ENCODE measurements at regions of chr11 and their contacts with region 1.

Region 1: GRCh38 chr11:59053387-59053786 is 32.7 kb upstream of the GLYATL1B start:
- DNase-seq: peak; percentile 88
- H3K4me3 Mint-ChIP-seq: no peak overlapping the region
- H3K27ac Mint-ChIP-seq: no peak overlapping the region
- H3K4me1 Mint-ChIP-seq: peaks cover 3% of the 10 kb centered on the region
- H3K27me3 Mint-ChIP-seq: peaks cover 22% of the 10 kb centered on the region

Region 2: DNA sequence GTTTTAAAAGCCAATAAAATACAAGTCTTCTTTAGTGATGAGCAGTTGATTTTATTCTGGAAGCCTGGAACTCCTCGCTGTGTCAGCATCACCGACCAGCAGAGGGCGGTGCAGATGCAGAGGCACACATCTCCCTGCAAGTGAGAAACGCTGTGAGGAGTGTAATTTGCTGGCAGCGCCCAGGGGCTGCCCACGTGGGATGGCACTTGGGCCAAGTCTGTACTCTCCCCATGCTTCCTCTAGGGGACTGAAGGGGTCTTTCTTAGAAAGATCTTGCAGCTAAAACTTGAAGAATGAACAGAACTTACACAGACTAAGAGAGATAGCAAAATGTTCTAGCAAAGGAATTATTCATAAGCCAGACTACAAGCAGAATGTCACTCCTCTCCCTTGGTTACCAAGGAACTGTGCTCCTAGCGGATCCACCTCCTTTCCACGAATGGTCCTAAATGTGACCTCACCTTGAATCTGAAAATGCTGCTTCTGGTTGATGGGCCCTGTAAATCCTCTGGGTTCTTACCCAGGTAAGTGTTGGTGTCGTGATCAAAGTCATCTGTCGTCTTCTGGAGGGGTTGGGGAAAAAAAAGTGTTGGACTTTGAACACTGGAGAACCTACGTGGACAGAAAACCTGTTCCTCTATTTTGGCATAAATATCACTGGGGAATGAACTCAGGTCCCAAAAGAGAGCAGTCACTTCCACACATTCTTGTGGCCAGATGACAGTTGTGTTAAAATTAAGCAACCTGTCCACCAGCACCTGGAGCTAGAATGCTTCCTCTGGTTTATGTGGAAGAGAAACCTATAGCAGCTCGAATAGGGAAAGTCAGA is 399.1 kb before region 1 on chr11:
- CTCF ChIA-PET with region 1: interaction called, 10 read pairs
- intact Hi-C with region 1: loop called (anchors 1 kb)
- DNase-seq: peak; percentile 89
- H3K4me3 Mint-ChIP-seq: no peak overlapping the region
- H3K27ac Mint-ChIP-seq: no peak overlapping the region
- H3K4me1 Mint-ChIP-seq: peaks cover 18% of the 10 kb centered on the region
- H3K27me3 Mint-ChIP-seq: no peaks in the 10 kb centered on the region

Region 3: GRCh38 chr11:58900479-58901420 is 152.6 kb before region 1 on chr11:
- CTCF ChIA-PET with region 1: interaction called, 4 read pairs
- intact Hi-C with region 1: loop called (anchors 5 kb)
- DNase-seq: peak; percentile 81
- H3K4me3 Mint-ChIP-seq: no peak overlapping the region
- H3K27ac Mint-ChIP-seq: no peak overlapping the region
- H3K4me1 Mint-ChIP-seq: no peaks in the 10 kb centered on the region
- H3K27me3 Mint-ChIP-seq: peaks cover 49% of the 10 kb centered on the region

Region 4: DNA sequence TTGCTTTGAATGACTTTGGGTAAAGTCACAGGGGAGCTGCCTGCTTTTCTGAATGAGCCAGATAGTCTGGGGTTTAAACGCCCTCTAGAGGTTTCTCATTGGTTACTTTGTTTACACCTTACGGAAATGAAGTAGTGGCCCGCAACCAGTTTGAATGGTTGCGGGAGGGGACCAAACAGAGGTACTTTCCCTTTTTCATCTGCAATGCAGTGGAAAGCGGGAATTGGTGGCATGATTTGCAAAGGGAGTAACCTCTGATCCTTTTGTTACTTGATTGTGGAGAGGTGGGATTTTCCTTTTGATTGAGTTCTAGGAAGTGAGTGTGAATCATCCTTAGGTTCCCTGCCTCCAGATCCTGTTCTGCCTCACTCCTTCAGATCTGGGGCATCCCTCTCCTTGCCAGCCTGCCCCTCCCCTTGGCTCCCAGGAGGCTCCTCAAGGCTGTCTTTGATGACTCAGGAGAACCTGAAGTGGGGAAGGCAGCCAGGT is 130.0 kb before region 1 on chr11:
- CTCF ChIA-PET with region 1: interaction called, 5 read pairs
- intact Hi-C with region 1: loop called (anchors 1 kb)
- DNase-seq: peak; percentile 61
- H3K4me3 Mint-ChIP-seq: no peak overlapping the region
- H3K27ac Mint-ChIP-seq: peak overlapping the region; percentile 11
- H3K4me1 Mint-ChIP-seq: peaks cover 25% of the 10 kb centered on the region
- H3K27me3 Mint-ChIP-seq: no peaks in the 10 kb centered on the region

Region 5: DNA sequence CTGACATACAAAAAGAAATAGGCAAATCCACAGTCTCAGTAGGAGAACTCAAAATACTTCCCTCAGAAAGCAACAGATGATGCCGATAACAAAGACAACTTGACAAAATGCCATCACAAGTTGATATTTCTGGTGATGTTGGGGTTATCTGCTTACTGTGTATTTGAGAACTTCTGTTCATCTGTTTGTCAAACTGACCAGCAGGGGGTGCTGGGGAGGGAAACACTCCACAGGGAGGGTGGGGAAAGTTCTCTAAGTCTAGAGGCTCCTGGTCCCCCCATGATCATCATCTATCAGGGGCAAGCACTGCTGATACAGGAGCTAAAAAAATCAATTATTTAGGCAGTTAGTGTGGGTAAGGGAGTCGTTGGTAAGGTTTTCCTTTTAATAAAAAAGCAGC is 94.9 kb before region 1 on chr11:
- CTCF ChIA-PET with region 1: interaction called, 4 read pairs
- intact Hi-C with region 1: loop called (anchors 1 kb)
- DNase-seq: peak; percentile 62
- H3K4me3 Mint-ChIP-seq: no peak overlapping the region
- H3K27ac Mint-ChIP-seq: no peak overlapping the region
- H3K4me1 Mint-ChIP-seq: peaks cover 8% of the 10 kb centered on the region
- H3K27me3 Mint-ChIP-seq: peaks cover 6% of the 10 kb centered on the region

Region 6: DNA sequence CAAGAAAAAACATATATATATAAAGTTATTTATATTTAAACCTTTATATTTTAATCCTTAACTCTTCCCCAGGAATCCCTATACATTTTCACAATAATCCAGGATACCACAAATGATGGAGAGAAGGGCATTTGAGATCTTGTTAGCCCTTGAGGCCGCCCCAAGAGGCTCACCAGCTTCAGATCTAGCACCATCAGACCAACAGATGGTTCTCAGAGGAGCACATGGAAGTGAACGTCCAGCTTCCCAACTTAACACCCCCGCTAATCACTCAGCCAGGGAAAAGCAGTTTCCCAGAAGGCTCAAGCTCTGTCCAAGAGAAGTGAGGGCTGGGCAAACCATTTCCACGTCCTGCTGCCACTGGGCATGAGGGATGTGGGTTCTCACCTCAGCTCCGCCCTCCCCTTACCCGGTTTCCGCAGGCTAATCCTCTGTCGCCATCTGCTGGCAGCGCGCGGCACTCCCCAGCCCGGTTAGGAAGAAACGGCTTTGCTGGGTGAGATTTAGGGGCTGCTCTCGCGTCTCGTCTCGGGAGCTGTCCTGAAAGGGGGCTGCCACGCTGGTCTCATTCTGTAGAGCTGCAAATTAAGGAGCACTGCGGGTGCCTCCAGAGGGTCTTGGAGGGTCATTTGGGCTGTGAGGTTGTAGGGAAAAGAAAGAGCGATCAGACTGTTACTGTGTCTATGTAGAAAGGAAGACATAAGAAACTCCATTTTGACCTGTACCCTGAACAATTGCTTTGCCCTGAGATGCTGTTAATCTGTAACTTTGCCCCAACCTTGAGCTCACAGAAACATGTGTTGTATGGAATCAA is 82.5 kb after region 1 on chr11:
- CTCF ChIA-PET with region 1: interaction called, 12 read pairs
- intact Hi-C with region 1: loop called (anchors 1 kb)
- DNase-seq: peak; percentile 93
- H3K4me3 Mint-ChIP-seq: peak overlapping the region; percentile 26
- H3K27ac Mint-ChIP-seq: no peak overlapping the region
- H3K4me1 Mint-ChIP-seq: peaks cover 6% of the 10 kb centered on the region
- H3K27me3 Mint-ChIP-seq: no peaks in the 10 kb centered on the region

Region 7: GRCh38 chr11:59224351-59224928 is 171.1 kb after region 1 on chr11:
- CTCF ChIA-PET with region 1: no interaction called
- intact Hi-C with region 1: no loop called
- DNase-seq: no peak
- H3K4me3 Mint-ChIP-seq: no peak overlapping the region
- H3K27ac Mint-ChIP-seq: no peak overlapping the region
- H3K4me1 Mint-ChIP-seq: peaks cover 8% of the 10 kb centered on the region
- H3K27me3 Mint-ChIP-seq: peaks cover 4% of the 10 kb centered on the region